Mucosa of descending colon (tissue), 3 donors: ENCODE measurements at regions of chr5 and their contacts with region 1.

Region 1: GRCh38 chr5:181005791-181006190 is 17.1 kb downstream of the BTNL3 start:
- DNase-seq: no peak
- ATAC-seq: no peak
- H3K4me3 ChIP-seq: no peak overlapping the region
- H3K4me1 ChIP-seq: no peaks in the 10 kb centered on the region
- CTCF ChIP-seq: no peak

Region 2: DNA sequence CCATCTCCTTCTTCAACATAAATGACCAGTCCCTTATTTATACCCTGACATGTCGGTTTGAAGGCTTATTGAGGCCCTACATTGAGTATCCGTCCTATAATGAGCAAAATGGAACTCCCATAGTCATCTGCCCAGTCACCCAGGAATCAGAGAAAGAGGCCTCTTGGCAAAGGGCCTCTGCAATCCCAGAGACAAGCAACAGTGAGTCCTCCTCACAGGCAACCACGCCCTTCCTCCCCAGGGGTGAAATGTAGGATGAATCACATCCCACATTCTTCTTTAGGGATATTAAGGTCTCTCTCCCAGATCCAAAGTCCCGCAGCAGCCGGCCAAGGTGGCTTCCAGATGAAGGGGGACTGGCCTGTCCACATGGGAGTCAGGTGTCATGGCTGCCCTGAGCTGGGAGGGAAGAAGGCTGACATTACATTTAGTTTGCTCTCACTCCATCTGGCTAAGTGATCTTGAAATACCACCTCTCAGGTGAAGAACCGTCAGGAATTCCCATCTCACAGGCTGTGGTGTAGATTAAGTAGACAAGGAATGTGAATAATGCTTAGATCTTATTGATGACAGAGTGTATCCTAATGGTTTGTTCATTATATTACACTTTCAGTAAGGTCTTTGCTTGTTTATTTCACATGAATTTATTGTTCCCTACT is 55.4 kb before region 1 on chr5:
- intact Hi-C with region 1: loop called in 1 of 2 experiments (anchors 10 kb)
- DNase-seq: no peak
- ATAC-seq: no peak
- H3K4me3 ChIP-seq: no peak overlapping the region
- H3K4me1 ChIP-seq: no peaks in the 10 kb centered on the region
- CTCF ChIP-seq: no peak